ENCODE measurements at regions of chrX and their contacts with region 1.

Region 1: GRCh38 chrX:19625612-19626011 is 110.3 kb upstream of the MAP3K15 start:
- DNase-seq: peak; percentile 80
- H3K4me3 Mint-ChIP-seq: no peak overlapping the region
- H3K27ac Mint-ChIP-seq: peak overlapping the region; percentile 91
- H3K4me1 Mint-ChIP-seq: peaks cover 74% of the 10 kb centered on the region
- H3K27me3 Mint-ChIP-seq: no peaks in the 10 kb centered on the region

Region 2: DNA sequence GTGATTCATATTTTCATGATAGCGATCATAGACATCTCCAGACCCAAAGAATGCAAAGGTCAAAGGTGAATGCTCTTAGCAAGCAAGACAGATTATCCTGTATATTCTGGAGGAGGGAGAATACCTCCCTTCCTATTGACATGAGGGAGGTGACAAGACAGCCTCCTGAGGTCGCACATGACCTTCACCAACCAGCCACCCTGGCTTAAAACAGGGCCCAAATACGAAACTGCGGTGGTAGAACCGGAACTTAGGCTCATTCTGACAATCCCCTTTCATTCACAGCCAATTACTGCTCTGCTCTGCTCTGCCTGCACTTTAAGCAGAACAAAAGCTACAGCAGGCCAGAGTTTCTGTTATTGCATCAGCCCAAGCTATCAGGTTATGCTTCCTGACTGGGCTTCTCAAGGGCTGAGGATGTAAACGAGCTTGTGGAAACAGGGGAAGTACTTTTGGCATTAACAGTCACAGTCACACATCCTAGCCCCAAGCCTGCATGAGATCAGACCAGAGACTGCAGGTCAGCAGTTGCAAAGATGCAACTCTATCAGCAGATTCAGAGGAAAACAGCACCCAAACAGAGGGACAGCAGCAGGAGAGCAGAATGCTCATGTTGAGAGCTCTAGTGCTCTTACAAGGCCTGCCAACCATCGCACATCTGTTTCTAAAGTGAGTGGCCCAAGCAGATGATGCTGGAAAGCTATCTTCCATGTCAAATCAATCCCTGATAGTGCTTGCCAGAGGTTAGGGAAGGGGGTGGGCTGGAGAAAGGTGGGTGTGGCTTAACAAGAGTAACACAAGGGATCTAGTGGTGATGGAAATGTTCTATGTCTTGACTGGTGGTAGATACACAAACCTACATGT is 59.0 kb before region 1 on chrX:
- CTCF ChIA-PET with region 1: no interaction called
- POLR2A ChIA-PET with region 1: no interaction called
- intact Hi-C with region 1: loop called (anchors 5 kb)
- DNase-seq: peak; percentile 63
- H3K4me3 Mint-ChIP-seq: peak overlapping the region; percentile 24
- H3K27ac Mint-ChIP-seq: peak overlapping the region; percentile 93
- H3K4me1 Mint-ChIP-seq: peaks cover 68% of the 10 kb centered on the region
- H3K27me3 Mint-ChIP-seq: no peaks in the 10 kb centered on the region

Region 3: GRCh38 chrX:19642241-19643109 is 16.9 kb after region 1 on chrX:
- CTCF ChIA-PET with region 1: interaction called, 3 read pairs
- POLR2A ChIA-PET with region 1: interaction called, 3 read pairs
- intact Hi-C with region 1: loop called (anchors 1 kb)
- DNase-seq: no peak
- H3K4me3 Mint-ChIP-seq: no peak overlapping the region
- H3K27ac Mint-ChIP-seq: peak overlapping the region; percentile 40
- H3K4me1 Mint-ChIP-seq: peaks cover 26% of the 10 kb centered on the region
- H3K27me3 Mint-ChIP-seq: no peaks in the 10 kb centered on the region

Region 4: GRCh38 chrX:19659925-19660324 is 34.3 kb after region 1 on chrX:
- CTCF ChIA-PET with region 1: interaction called, 4 read pairs
- POLR2A ChIA-PET with region 1: no interaction called
- intact Hi-C with region 1: loop called (anchors 5 kb)
- DNase-seq: no peak
- H3K4me3 Mint-ChIP-seq: no peak overlapping the region
- H3K27ac Mint-ChIP-seq: no peak overlapping the region
- H3K4me1 Mint-ChIP-seq: peaks cover 51% of the 10 kb centered on the region
- H3K27me3 Mint-ChIP-seq: no peaks in the 10 kb centered on the region

Region 5: GRCh38 chrX:19747652-19748610 is 122.3 kb after region 1 on chrX:
- CTCF ChIA-PET with region 1: no interaction called
- POLR2A ChIA-PET with region 1: no interaction called
- intact Hi-C with region 1: loop called (anchors 1 kb)
- DNase-seq: peak; percentile 85
- H3K4me3 Mint-ChIP-seq: peak overlapping the region; percentile 64
- H3K27ac Mint-ChIP-seq: peak overlapping the region; percentile 97
- H3K4me1 Mint-ChIP-seq: peaks cover 91% of the 10 kb centered on the region
- H3K27me3 Mint-ChIP-seq: no peaks in the 10 kb centered on the region

Region 6: GRCh38 chrX:19785647-19786046 is 160.0 kb after region 1 on chrX:
- CTCF ChIA-PET with region 1: no interaction called
- POLR2A ChIA-PET with region 1: interaction called, 3 read pairs
- intact Hi-C with region 1: loop called (anchors 5 kb)
- DNase-seq: peak; percentile 86
- H3K4me3 Mint-ChIP-seq: no peak overlapping the region
- H3K27ac Mint-ChIP-seq: peak overlapping the region; percentile 94
- H3K4me1 Mint-ChIP-seq: peaks cover 79% of the 10 kb centered on the region
- H3K27me3 Mint-ChIP-seq: no peaks in the 10 kb centered on the region

Region 7: DNA sequence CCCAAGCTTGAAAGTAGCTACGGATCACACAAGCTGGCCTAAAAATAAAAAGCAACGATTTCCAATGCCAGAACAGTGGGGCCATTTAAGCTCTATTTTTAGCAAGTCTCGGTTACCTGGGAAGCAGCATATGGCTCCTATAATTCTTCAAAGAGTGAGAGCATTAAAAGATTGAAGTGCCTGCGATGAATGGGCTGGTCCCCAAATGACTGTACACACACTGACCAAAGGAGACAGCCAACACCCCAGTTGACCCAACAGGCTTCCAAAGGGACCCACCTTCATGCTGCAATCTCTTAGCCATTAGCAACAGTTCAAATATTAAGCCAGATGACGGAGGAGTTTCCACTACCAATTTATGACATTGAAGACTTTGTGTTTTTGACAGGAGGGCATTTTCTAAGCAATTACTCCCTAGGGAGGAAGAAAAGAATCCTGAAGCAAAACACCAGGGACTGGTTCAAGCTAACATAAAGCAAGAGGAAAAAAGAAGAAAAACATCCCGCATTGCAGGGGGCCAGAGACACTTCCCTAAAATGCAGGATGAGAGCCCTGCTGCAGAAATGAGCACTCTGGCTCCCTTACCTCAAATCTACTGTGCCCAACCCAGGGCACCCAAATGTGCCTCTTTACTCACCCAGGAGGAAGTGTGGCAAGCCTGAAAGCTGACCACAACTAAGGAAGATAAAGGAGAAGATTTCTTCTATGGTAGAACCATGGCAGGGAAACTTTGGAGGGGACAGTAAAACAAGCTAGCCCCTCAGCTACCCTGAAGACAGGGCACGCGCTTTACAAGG is 240.2 kb after region 1 on chrX:
- CTCF ChIA-PET with region 1: no interaction called
- POLR2A ChIA-PET with region 1: no interaction called
- intact Hi-C with region 1: no loop called
- DNase-seq: no peak
- H3K4me3 Mint-ChIP-seq: no peak overlapping the region
- H3K27ac Mint-ChIP-seq: peak overlapping the region; percentile 33
- H3K4me1 Mint-ChIP-seq: peaks cover 64% of the 10 kb centered on the region
- H3K27me3 Mint-ChIP-seq: no peaks in the 10 kb centered on the region

Measured in activated CD4-positive, alpha-beta memory T cell treated with anti-CD3 and anti-CD28 coated beads for 36 hours (primary cell).